IMR-90 (cell line): ENCODE measurements at regions of chr21 and their contacts with region 1.

Region 1: GRCh38 chr21:35427320-35428000 is 378.4 kb upstream of the RUNX1 start:
- DNase-seq: no peak
- ATAC-seq: no peak
- H3K4me3 ChIP-seq: no peak overlapping the region
- H3K27ac ChIP-seq: no peak overlapping the region
- H3K4me1 ChIP-seq: peaks cover 1% of the 10 kb centered on the region; the same call in 1 of the 2 replicates
- H3K27me3 ChIP-seq: no peaks in the 10 kb centered on the region
- CTCF ChIP-seq: no peak
- POLR2A ChIP-seq: no peak
- RAD21 ChIP-seq: no peak

Region 2: DNA sequence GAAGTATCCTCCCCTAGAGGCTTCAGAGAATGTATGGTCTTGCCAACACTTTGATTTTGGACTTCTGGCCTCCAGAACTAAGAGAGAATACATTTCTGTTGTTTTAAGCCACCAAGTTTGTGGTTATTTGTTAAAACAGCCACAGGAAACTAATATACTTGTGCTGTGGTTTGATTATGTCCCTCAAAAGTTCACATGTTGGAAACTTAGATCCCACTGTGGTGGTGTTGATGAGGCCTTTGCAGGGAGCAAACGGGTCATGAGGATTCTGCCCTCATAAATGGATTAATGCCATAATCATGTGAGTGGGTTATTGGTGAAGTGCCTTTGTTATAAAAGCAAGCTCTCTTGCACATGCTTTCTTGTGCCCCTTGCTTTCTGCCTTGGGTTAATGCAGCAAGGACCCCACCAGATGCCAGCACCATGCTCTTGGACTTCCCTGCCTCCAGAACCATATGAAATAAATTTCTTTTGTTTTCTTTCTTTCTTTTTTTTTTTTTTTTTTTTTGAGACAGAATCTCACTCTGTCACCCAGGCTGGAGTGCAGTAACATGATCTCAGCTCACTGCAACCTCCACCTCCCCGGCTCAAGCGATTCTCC is 601.4 kb before region 1 on chr21:
- CTCF ChIA-PET with region 1: no interaction called
- POLR2A ChIA-PET with region 1: interaction called, 15 read pairs
- dilution Hi-C with region 1: no loop called
- in situ Hi-C with region 1: no loop called
- intact Hi-C with region 1: no loop called
- DNase-seq: no peak
- ATAC-seq: no peak
- H3K4me3 ChIP-seq: no peak overlapping the region
- H3K27ac ChIP-seq: no peak overlapping the region
- H3K4me1 ChIP-seq: no peaks in the 10 kb centered on the region
- H3K27me3 ChIP-seq: no peaks in the 10 kb centered on the region
- CTCF ChIP-seq: no peak
- POLR2A ChIP-seq: no peak
- RAD21 ChIP-seq: no peak

Region 3: DNA sequence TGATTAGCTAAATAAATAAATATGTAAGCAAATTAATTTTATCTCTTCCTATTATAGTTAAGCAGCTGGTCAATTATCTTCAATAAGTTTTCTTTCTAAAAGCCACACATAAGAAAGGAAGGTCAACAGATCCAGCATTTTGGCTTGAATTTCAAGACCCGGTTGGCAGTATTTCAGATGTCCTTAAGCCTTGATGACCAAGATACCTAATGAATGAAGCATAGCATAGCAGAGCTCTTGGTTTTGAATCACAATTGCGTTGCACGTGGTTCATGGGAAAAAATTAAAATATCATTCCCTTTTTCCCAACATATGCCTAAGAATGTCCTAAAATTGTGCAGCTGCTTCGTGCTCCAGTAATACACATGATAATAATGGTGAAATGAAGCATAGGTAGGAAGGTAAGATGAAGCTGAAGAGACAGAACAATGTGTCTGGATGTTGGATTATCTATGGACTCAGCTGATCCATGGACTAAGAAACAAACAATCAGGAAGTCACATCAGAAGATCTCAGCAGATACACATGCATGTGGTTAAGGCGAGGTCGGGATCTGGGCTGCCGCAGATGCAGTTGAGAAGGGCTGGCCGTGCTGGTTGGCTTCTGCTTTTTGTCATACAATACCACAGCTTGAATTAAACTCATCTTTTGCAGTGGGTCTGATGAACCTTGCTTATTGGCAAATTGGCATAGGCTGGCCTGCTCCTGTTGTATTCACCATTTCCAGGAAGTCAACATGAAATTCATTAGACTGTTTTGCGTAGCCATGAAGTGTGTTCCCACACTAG is 93.4 kb before region 1 on chr21:
- CTCF ChIA-PET with region 1: no interaction called
- POLR2A ChIA-PET with region 1: no interaction called
- dilution Hi-C with region 1: no loop called
- in situ Hi-C with region 1: no loop called
- intact Hi-C with region 1: no loop called
- DNase-seq: no peak
- ATAC-seq: no peak
- H3K4me3 ChIP-seq: no peak overlapping the region
- H3K27ac ChIP-seq: no peak overlapping the region
- H3K4me1 ChIP-seq: no peaks in the 10 kb centered on the region
- H3K27me3 ChIP-seq: no peaks in the 10 kb centered on the region
- CTCF ChIP-seq: no peak
- POLR2A ChIP-seq: no peak
- RAD21 ChIP-seq: no peak

Region 4: DNA sequence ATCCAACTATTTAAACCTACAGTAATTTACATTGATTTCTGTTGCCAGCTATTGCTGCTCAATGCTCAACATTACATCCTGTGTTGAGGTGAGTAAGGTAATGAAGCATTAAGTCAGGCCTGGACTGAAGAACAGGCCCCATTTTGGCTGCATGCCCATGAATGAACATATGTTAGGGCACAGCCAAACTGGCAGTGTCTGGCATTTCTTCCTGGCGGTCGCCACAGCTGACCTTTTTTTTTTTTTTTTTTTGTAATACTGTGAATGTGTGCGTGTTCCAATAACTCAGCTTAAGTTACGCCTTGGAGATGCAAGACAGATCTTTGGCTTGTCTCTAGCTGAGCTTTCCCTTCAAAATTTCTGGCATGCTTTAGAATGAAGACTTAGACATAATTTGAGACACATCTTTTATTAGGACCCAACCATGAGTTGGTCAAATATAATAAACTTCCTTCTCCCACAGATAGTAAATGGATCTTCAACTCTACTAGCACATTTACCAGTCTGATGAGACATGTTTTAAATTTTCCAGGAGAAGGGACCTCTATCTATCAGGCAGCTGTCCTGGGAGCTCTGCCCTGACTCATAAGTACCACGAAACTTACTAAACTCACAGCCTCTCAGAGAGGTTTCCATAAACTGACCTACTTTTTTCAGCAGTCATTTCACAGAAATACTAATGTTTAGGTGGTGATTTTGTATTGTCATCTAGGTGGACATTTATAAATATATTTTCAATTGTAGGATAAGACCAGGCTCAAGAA is 37.3 kb before region 1 on chr21:
- CTCF ChIA-PET with region 1: no interaction called
- POLR2A ChIA-PET with region 1: no interaction called
- dilution Hi-C with region 1: no loop called
- in situ Hi-C with region 1: no loop called
- intact Hi-C with region 1: no loop called
- DNase-seq: peak; percentile 79
- ATAC-seq: peak; percentile 78
- H3K4me3 ChIP-seq: no peak overlapping the region
- H3K27ac ChIP-seq: no peak overlapping the region
- H3K4me1 ChIP-seq: peaks cover 2% of the 10 kb centered on the region; the same call in 1 of the 2 replicates
- H3K27me3 ChIP-seq: no peaks in the 10 kb centered on the region
- CTCF ChIP-seq: no peak
- POLR2A ChIP-seq: no peak
- RAD21 ChIP-seq: no peak

Region 5: GRCh38 chr21:35438643-35439404 is 11.4 kb after region 1 on chr21:
- CTCF ChIA-PET with region 1: interaction called, 3 read pairs
- POLR2A ChIA-PET with region 1: interaction called, 17 read pairs
- dilution Hi-C with region 1: no loop called
- in situ Hi-C with region 1: no loop called
- intact Hi-C with region 1: no loop called
- DNase-seq: peak; percentile 11
- ATAC-seq: no peak
- H3K4me3 ChIP-seq: no peak overlapping the region
- H3K27ac ChIP-seq: no peak overlapping the region
- H3K4me1 ChIP-seq: no peaks in the 10 kb centered on the region
- H3K27me3 ChIP-seq: no peaks in the 10 kb centered on the region; the same call in none of the 2 replicates
- CTCF ChIP-seq: no peak
- POLR2A ChIP-seq: no peak
- RAD21 ChIP-seq: no peak